ENCODE measurements at regions of chr10 and their contacts with region 1.

Region 1: DNA sequence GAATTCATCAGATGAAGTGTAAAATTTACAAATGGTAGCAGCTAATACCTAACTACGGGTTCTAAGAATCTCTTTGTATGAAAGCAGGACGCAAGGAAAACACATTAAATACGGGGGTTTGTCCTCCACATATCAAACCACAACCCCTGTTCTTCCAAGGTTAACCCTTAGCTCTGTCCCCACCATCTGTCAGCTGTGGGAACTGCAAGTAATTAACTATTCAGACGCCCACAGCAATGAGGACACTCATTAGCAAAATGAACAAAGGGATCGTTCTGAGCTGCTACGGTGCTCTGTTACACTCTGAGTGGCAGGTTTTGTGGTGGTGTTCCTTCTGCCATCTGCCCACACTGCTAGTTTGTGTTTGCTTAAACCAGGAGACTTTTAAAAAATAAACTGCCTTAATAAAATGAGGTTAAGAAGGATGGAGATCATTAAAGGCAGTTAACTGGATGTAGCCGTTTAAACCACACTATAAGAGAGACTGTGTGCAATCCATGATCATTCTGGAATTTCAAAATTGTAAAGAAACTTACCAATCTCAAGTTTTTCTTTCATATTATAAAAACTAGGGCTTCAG is 51.4 kb downstream of the C10orf67 start:
- H3K4me3 ChIP-seq: no peak overlapping the region
- H3K27ac ChIP-seq: no peak overlapping the region
- H3K4me1 ChIP-seq: no peaks in the 10 kb centered on the region
- CTCF ChIP-seq: no peak

Region 2: DNA sequence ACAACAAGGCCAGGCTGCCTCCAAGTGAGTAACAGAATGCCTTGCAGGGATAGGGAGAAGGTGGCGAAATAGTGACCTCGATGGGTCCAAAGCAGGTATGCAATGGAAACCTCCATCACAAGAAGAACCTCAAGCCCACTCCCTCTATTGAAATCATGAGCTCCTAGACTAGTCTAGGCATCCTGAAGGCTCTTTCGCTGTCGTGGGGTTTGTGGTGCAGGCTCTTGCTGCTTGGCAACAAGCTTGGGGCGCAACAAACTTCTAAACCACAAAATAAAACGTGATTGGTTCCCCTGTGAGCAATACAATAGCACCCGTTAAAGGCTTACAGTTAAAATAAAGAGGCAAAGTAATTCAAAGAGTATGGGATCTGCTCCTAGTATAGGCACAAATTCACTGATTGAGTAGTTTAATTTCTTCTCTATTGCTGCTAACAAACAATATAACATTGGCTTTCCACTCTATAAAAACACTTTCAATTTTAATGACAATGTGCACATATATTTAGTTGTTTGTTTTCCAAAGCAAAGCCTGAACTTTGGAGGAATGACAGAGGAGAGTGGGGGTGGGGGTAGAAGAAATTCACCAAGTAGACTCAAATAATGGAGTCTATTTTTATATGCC is 12.7 kb before region 1 on chr10:
- CTCF ChIA-PET with region 1: interaction called, 42 read pairs
- POLR2A ChIA-PET with region 1: no interaction called
- H3K4me3 ChIP-seq: no peak overlapping the region
- H3K27ac ChIP-seq: no peak overlapping the region
- H3K4me1 ChIP-seq: no peaks in the 10 kb centered on the region
- CTCF ChIP-seq: no peak

Region 3: DNA sequence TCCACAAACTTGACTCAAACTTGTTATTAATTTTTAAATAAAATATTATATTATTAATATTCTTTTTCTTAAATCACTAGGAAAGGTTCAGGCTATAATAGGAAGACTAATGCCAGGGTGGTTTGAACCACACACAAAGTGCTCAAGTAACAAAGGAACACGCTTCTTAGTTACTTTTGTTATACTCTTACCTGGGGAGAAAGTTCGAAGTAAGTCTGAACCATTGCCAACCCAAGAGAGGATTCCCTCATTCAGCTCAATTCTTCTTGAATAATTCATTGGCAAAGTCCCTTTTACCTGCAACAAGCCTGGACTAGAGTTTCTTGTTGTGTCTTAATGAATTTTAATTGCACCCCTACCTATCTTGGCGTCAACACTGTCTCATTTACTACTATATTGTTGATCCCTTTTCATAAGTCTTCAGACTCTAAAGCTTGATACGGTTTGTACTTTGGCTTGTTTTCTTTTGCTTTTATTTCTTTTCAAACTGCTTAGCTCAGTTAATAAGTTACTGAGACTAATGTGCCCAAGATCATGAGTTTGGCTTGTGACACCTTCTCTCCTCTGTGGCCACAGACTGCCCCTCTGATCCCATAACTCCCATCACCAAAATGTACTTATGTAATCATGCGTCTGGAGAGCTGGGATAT is 61.5 kb after region 1 on chr10:
- CTCF ChIA-PET with region 1: no interaction called
- POLR2A ChIA-PET with region 1: no interaction called
- H3K4me3 ChIP-seq: no peak overlapping the region
- H3K27ac ChIP-seq: no peak overlapping the region
- H3K4me1 ChIP-seq: no peaks in the 10 kb centered on the region
- CTCF ChIP-seq: no peak

Region 4: GRCh38 chr10:23525406-23525805 is 232.2 kb after region 1 on chr10:
- CTCF ChIA-PET with region 1: interaction called, 41 read pairs
- POLR2A ChIA-PET with region 1: no interaction called
- H3K4me3 ChIP-seq: no peak overlapping the region
- H3K27ac ChIP-seq: no peak overlapping the region
- H3K4me1 ChIP-seq: no peaks in the 10 kb centered on the region
- CTCF ChIP-seq: no peak